ENCODE measurements at regions of chr3 and their contacts with region 1.

Region 1: GRCh38 chr3:9915254-9916141 is 1.4 kb upstream of the IL17RC start:
- DNase-seq: peak in 1 of 2 donors; percentile 89
- H3K4me3 ChIP-seq: peak overlapping the region; percentile 58 to 76
- H3K27ac ChIP-seq: peak overlapping the region; percentile 90
- H3K4me1 ChIP-seq: peaks cover 61% of the 10 kb centered on the region
- H3K27me3 ChIP-seq: no peaks in the 10 kb centered on the region
- CTCF ChIP-seq: peak in 1 of 3 experiments; percentile 33
- POLR2A ChIP-seq: peak in 1 of 2 donors; percentile 7

Region 2: DNA sequence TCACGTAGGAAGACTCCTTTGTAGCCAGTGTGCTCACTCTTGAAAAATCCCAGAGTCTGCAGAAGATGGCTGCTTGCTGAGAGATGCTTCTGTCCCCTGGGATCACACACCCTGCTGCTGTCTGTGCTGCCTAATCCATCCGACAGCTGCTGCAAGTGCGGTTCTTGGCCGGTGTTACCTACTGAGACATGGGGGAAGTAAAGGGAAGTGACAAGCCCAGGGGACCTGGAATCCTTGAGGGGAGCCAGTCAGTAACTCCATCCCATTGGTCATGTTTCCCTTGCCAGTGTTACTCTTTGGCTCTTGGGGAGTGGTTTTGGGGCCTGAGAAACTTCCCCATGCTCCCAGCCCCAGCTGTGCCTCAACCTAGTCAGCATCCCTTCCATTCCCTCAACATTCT is 220.2 kb before region 1 on chr3:
- intact Hi-C with region 1: no loop called
- DNase-seq: no peak
- H3K4me3 ChIP-seq: no peak overlapping the region
- H3K27ac ChIP-seq: no peak overlapping the region
- H3K4me1 ChIP-seq: no peaks in the 10 kb centered on the region
- H3K27me3 ChIP-seq: no peaks in the 10 kb centered on the region
- CTCF ChIP-seq: no peak
- POLR2A ChIP-seq: no peak

Region 3: GRCh38 chr3:9731206-9732079 is 184.1 kb before region 1 on chr3 and contains the start of gene BRPF1:
- intact Hi-C with region 1: loop called (anchors 10 kb)
- DNase-seq: peak; percentile 98 to 99
- H3K4me3 ChIP-seq: peak within 1 kb of the TSS; percentile 65 to 87
- H3K27ac ChIP-seq: peak within 1 kb of the TSS; percentile 94
- H3K4me1 ChIP-seq: peaks cover 30% of the 10 kb centered on the region
- H3K27me3 ChIP-seq: no peaks in the 10 kb centered on the region
- CTCF ChIP-seq: peak in 1 of 3 experiments; percentile 15
- POLR2A ChIP-seq: no peak
- total RNA-seq, gene BRPF1: 16.9 TPM

Region 4: GRCh38 chr3:9862391-9863057 is 53.0 kb before region 1 on chr3:
- intact Hi-C with region 1: loop called (anchors 5 kb)
- DNase-seq: no peak
- H3K4me3 ChIP-seq: peak overlapping the region; percentile 38
- H3K27ac ChIP-seq: peak overlapping the region; percentile 90
- H3K4me1 ChIP-seq: peaks cover 34% of the 10 kb centered on the region
- H3K27me3 ChIP-seq: no peaks in the 10 kb centered on the region
- CTCF ChIP-seq: peak in 2 of 3 experiments; percentile 28 to 50
- POLR2A ChIP-seq: no peak

Measured in vagina (tissue), 2 donors.